PC-3 (cell line): ENCODE measurements at regions of chr19 and their contacts with region 1.

Region 1: DNA sequence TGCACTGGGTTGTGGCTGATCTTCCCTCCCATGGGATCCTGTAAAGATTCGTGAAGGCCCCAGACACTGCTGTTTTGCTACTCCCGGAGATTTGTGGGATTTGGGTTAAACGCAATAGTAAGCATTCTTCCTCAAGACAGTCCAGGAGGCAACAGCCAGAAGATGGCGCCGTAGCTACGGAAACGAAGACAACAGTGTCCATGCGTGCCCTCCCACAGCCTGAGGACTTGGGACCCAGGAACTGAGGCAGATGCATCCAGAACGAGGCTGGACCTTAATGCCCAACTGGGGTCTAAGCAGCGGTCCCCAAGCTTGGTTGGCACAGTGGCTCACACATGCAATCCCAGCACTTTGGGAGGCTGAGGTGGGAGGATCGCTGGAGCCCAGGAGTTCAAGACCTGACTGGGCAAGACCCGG is 57.6 kb upstream of the ZNF507 start:
- DNase-seq: peak; percentile 60
- ATAC-seq: peak; percentile 63
- H3K4me3 ChIP-seq: no peak overlapping the region
- H3K27ac ChIP-seq: no peak overlapping the region
- H3K4me1 ChIP-seq: no peaks in the 10 kb centered on the region
- H3K27me3 ChIP-seq: peaks cover 6% of the 10 kb centered on the region; the same call in 1 of the 2 replicates
- CTCF ChIP-seq: peak; percentile 64

Region 2: DNA sequence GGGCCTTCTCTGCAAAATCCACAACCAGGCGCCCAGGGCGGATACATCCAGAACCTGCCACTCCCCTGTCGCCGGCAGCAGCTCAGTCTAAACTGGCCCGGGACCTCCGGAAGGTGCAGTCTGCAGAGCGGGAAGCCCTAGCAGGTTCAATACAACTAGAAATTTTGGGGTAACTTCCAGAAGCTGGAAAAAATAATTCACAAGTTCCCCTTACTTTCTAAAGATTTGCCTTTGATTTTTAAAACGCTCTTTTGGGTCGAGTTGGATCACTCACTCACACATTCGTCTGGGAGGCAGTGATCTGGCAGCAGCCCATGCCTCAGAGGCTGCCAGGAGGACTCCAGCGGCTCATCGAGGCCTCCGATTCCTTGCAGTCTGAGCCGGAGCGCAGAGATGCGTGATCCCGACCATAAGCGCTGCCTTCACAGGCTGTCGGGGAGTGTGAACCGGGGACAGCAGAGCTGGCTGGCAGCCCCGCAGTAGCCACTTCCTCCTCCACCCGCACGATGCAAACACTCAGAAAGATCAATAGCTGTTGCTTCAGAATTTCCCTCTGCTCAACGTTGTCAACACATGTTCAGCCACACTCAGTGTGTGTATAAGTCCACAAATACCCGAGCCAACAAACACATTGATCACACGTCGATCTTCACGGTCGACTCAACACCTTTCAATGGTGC is 22.0 kb after region 1 on chr19:
- CTCF ChIA-PET with region 1: no interaction called
- POLR2A ChIA-PET with region 1: no interaction called
- intact Hi-C with region 1: no loop called
- DNase-seq: no peak
- ATAC-seq: no peak
- H3K4me3 ChIP-seq: no peak overlapping the region
- H3K27ac ChIP-seq: no peak overlapping the region
- H3K4me1 ChIP-seq: no peaks in the 10 kb centered on the region
- H3K27me3 ChIP-seq: no peaks in the 10 kb centered on the region
- CTCF ChIP-seq: no peak

Region 3: DNA sequence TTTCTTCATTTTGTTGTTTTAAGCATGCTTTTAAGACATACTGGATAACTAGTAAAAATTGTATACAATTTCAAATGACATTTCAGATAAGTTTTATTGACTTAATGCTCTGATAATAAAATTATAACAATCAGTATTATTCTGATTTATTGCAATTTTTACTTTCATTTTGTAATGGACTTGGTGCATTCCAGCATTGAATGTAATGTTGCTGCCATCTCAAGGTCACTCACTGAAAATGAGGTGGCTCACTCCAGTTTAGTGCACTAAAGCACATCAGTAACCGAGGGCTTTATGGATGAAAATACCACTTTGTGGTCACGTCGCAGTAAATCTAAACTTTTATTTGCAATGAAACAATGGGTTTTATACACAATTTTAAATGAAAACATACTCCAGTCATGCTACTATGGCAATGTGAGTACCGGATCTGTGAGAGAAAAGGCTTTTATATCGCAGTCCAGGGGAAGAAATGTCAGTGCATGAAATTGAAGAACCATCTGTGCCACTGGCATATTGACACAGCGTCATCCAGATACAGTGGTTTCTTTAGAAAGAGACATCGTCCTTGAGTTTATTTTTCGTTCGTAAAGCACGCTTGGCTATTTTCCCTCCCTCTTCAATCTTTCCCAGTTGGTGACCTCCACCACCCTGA is 36.9 kb after region 1 on chr19:
- CTCF ChIA-PET with region 1: no interaction called
- POLR2A ChIA-PET with region 1: no interaction called
- intact Hi-C with region 1: loop called (anchors 2 kb)
- DNase-seq: no peak
- ATAC-seq: peak; percentile 45
- H3K4me3 ChIP-seq: peak overlapping the region; percentile 44; the same call in 1 of the 2 replicates
- H3K27ac ChIP-seq: no peak overlapping the region
- H3K4me1 ChIP-seq: peaks cover 12% of the 10 kb centered on the region; the same call in 1 of the 2 replicates
- H3K27me3 ChIP-seq: no peaks in the 10 kb centered on the region
- CTCF ChIP-seq: peak; percentile 39